ACHN (cell line): ENCODE measurements at regions of chr16 and their contacts with region 1.

Region 1: DNA sequence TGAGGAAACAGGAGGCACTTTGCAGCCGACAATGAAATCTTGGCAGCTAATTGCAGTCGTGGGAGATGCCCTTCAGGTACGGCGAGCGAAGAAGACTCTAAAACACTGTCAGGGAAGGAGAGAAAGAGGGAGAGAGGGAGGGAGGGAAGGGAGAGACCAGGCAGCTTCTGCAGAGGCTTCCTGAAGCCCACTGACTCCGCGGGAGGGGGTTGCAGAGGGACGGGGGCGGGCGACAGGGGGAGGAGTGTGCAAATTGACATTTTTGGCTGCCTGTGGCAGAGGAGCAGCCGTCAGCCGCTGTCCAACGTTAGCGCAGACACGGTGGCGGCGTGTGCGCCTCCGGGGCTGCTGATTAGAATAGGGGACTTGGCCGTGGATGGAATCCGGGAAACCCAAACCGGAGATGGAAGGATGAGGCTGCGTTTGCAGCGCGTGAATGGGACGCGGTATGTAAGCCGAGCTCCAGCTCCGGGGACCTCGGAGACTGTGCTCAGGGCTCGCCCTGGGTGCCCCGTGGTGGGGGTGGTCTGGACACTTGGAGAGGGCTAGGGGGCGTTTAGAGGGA is 849.1 kb upstream of the RBFOX1 start:
- DNase-seq: no peak

Region 2: GRCh38 chr16:6375465-6376075 is 108.0 kb before region 1 on chr16:
- in situ Hi-C with region 1: loop called (anchors 25 kb)
- DNase-seq: no peak